ENCODE measurements at regions of chr7 and their contacts with region 1.

Region 1: DNA sequence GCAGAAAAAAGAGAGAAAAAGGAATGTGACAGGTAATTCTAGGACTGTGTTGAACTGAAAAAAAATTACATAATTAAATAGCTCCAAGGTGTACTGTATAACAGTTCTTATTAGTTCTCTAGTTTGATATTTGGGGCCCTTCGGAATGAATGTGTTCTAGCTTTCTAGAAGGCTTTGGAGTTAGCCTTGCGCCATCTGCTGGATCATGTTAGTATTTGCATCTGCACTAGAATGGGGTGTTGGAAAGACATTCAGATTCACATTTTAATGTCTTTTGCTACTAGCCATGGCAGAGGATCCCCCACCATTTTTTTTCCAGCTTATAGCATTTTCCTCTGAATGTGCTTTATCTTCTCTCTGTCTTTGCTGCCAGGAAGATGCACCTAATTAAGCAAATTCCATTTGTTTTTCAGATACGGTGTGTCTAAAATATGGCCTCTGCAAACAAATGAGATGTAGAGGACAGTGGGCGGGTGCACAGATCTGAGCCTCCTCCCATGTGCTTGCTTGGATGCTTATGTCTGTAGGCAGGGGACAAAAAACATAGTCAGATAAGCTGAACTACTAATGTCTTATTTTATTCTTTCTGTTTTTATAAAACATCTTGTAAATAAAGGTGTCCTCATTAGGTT is 238.5 kb downstream of the PHF14 start:
- DNase-seq: peak; percentile 66
- ATAC-seq: peak; percentile 88
- H3K4me3 ChIP-seq: no peak overlapping the region
- H3K27ac ChIP-seq: no peak overlapping the region
- H3K4me1 ChIP-seq: peaks cover 5% of the 10 kb centered on the region
- H3K27me3 ChIP-seq: no peaks in the 10 kb centered on the region
- CTCF ChIP-seq: peak; percentile 76
- POLR2A ChIP-seq: no peak
- RAD21 ChIP-seq: peak; percentile 74

Region 2: DNA sequence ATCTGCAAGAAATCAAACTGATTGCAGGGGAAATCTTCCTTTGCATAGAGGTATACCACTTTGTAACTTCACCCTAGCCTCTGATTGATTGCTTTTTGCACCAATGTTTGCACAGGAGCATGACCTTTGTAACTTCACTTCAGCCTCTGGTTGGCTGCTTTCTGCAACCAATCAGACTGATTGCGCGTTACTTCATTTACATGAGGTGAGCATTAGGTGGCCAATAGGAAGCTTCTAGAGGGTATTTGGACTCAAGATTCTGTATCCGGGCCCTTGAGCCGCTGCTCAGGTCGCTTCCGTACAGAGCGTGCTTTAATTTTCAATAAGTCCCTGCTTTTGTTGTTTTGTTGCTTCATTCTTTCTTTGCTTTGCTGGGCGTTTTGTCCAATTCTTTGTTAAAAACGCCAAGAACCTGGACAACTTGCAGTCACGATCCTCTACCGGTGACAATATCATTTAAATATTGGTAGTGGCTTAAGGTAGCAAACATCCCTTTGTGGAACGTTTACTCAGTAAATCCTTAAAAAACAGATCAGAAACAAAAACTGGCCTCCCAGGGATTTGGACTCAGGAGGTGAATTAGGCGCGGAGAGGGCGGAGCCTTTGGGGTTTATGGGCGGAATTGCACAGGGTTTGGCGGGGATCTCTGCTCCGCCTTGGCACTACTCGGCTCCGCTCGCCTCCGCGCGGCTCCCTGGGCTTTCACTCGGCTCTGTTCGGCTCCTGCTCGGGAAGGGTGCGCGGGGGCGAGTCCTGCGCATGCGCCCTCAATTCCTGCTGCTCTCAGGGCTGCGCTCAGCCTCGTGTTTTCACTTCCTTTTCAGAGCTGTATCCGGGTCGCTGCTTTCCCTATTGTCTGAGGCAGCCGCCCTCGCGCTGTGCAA is 238.9 kb before region 1 on chr7 and contains the start of gene PHF14:
- CTCF ChIA-PET with region 1: interaction called, 4 read pairs
- POLR2A ChIA-PET with region 1: no interaction called
- dilution Hi-C with region 1: no loop called
- in situ Hi-C with region 1: no loop called
- intact Hi-C with region 1: loop called (anchors 1 kb)
- DNase-seq: peak; percentile 94
- ATAC-seq: peak; percentile 98
- H3K4me3 ChIP-seq: peak within 1 kb of the TSS; percentile 75
- H3K27ac ChIP-seq: peak within 1 kb of the TSS; percentile 58
- H3K4me1 ChIP-seq: no peaks in the 10 kb centered on the region
- H3K27me3 ChIP-seq: no peaks in the 10 kb centered on the region
- CTCF ChIP-seq: no peak
- POLR2A ChIP-seq: peak; percentile 81
- RAD21 ChIP-seq: no peak
- total RNA-seq, gene PHF14: 17.2 and 24.4 TPM in 2 replicates

Measured in IMR-90 (cell line).